GM10248 (cell line): ENCODE measurements at regions of chr3 and their contacts with region 1.

Region 1: DNA sequence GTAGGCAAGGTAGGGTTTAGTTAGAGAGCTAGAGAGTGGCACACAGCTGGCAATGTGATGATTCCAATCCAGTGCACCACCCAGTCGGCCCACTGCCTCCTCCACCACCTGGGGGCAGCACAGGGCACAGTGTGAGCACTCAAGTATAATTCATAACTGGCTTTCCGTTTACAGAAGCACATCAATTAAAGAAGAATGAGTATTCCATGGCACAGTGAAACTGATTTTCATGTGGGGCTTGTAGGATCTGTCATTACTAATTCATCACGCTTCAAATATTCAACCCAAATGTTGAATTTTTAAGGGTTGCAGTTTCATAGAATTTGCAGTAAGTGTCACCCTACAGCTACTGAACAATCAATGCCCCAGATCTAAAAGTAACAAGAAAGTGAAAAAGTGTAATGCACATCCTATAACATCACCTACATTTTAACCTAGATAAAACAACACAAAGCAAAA is 149.9 kb downstream of the IGSF11 start:
- DNase-seq: peak; percentile 32
- CTCF ChIP-seq: peak; percentile 88

Region 2: DNA sequence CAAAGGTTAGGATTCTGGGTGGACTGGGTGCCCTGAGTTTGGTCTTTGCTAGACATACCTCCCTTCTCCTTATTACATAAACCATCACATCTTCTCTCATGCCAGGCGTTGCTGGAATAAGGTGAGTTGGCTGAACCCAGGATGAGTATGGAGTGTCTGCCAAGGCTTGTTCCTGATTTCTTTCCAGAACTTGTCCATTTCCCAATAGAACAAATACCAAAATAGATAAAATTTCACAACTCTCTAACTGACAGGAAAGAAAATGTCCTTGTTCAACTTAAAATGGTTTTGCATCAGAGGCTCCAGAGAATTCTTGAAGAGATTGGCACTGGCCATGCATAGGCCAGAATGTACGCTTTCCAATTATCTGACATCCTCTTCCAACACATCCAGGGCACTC is 142.0 kb before region 1 on chr3:
- CTCF ChIA-PET with region 1: no interaction called
- POLR2A ChIA-PET with region 1: no interaction called
- DNase-seq: no peak
- CTCF ChIP-seq: no peak

Region 3: GRCh38 chr3:118863731-118864322 is 20.9 kb before region 1 on chr3:
- CTCF ChIA-PET with region 1: interaction called, 30 read pairs
- POLR2A ChIA-PET with region 1: no interaction called
- DNase-seq: no peak
- CTCF ChIP-seq: peak; percentile 32

Region 4: DNA sequence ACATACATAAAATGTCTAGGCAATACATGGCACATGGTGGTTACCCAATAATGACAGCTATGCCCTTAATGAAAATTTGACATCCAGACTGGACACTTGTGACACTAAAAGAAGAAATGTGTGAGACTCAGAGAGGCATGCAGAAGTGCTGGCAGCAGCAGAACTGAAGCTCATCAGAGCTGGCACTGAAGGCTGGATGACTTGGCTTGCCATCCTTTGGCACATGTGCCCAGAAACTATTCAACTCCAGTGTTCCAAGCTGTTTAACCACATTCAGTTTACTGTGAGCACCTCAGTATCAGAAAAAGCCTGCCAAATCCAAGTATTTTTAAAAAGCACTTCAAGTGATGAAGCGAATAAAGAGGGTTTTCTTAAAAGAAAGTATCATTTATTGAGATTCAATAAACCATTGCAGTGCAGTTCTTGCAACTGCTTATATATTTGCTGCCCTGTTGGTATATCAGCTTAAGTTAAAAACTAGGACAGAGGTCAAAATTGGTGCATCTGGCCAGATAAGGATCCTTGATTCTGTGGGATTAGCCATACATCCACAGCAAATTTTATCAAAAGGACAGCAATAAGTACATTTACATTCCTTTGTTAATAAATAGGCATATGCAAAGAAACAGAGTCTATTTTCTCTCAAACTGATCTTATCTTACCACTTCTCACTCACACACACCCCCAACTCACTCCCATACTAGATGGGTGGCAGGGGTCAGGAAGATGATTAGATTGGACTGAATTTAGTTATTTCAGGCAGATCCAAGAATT is 134.1 kb after region 1 on chr3:
- CTCF ChIA-PET with region 1: no interaction called
- POLR2A ChIA-PET with region 1: no interaction called
- DNase-seq: no peak
- CTCF ChIP-seq: no peak

Region 5: GRCh38 chr3:119034256-119035013 is 149.7 kb after region 1 on chr3 and contains the start of gene IGSF11:
- CTCF ChIA-PET with region 1: interaction called, 92 read pairs
- POLR2A ChIA-PET with region 1: no interaction called
- DNase-seq: peak; percentile 87
- CTCF ChIP-seq: peak; percentile 83

Region 6: DNA sequence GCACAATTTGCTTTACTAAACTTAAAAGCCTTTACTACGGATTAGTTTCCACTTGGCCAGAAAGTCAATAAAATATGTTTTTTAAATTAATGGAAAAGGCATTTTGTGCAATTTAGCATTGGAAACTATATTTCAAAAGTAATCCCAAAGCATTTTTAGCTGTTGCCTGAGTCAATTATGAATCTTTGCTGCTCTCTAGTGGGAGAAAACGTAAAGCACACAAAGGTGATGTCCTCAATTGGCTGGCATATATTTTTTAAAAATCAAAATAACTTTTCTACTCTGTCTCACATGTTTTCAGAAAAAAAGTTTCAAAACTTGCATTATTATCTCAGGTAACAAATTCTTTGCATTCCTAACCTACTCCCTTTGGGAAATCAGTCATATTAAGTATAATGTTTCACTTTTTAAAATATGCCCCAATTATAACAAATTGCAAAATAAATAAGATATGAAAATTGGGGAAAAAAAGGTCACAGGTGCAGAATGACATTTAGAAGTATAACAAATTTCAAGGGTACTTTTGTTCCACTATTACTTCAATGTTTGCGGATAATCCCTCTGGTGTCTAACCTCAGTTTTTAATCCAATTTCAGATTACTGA is 213.9 kb after region 1 on chr3:
- CTCF ChIA-PET with region 1: interaction called, 240 read pairs
- POLR2A ChIA-PET with region 1: no interaction called
- DNase-seq: peak; percentile 33
- CTCF ChIP-seq: peak; percentile 62

Region 7: GRCh38 chr3:119240591-119241434 is 356.0 kb after region 1 on chr3 and contains the start of gene B4GALT4:
- CTCF ChIA-PET with region 1: interaction called, 58 read pairs
- POLR2A ChIA-PET with region 1: no interaction called
- DNase-seq: peak; percentile 92
- CTCF ChIP-seq: no peak